SK-N-SH (cell line): ENCODE measurements at regions of chr6 and their contacts with region 1.

Region 1: DNA sequence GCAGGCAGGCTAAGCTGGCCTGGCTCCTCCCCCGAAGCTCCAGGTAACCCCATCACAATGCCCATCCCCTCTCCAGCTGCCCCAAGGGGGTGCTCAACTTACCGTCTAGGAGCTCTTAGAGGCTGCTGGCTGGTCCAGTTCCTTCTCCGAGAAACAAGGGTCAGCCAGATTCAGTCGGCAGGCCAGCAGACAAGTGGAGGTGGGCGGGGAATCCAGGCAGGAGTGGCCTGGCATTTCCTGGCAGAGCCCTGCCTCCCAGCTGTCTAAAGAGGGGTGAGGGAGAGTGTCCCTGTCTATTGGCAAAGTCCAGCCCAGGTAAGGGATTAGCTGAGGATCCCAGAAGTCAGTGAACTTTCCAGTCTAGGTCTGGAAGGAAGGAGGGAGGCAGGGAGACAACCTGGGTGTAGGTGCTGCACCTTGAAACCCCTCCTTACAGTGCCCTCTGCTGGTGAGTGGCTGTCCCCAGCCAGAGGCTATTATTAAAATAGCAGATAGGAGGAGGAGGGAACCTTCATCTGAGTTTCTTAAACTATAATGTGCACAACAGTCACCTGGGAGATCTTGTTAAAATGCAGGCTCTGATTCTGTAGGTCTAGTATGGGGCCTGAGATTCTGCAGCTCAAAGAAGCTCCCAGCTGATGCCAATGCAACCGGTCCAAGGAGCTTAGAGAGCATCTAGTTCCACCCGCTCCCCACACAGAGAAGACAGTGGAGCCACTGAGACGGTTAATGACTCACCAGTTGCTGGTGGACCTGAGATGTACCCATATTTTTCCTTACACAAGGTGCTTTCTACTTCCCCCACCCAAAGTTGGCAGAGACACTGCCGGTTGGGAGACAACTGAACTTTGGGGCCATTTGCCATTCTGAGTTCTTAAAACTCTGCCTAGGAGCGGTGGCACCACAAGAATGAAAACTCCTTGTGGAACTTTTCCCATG is at the start of gene UNC5CL:
- DNase-seq: peak; percentile 45
- H3K4me3 ChIP-seq: no peak within 1 kb of the TSS
- H3K27ac ChIP-seq: no peak within 1 kb of the TSS
- H3K4me1 ChIP-seq: no peaks in the 10 kb centered on the region; a peak in 1 of 4 replicates
- H3K27me3 ChIP-seq: no peaks in the 10 kb centered on the region
- CTCF ChIP-seq: peak; percentile 63
- EP300 ChIP-seq: no peak
- RAD21 ChIP-seq: 0 out of 2 replicates have a peak, but pooled peaks have one; percentile 15
- polyA plus RNA-seq, gene UNC5CL: 0.10 TPM in 2 replicates

Region 2: GRCh38 chr6:41053041-41053440 is 13.7 kb after region 1 on chr6 and contains the start of gene APOBEC2:
- CTCF ChIA-PET with region 1: interaction called, 10 read pairs
- POLR2A ChIA-PET with region 1: no interaction called
- DNase-seq: no peak
- H3K4me3 ChIP-seq: no peak within 1 kb of the TSS
- H3K27ac ChIP-seq: no peak within 1 kb of the TSS
- H3K4me1 ChIP-seq: peaks cover 0 to 4% of the 10 kb centered on the region in 2 experiments; a peak in 1 of 4 replicates
- H3K27me3 ChIP-seq: no peaks in the 10 kb centered on the region
- CTCF ChIP-seq: no peak
- EP300 ChIP-seq: no peak
- RAD21 ChIP-seq: no peak
- polyA plus RNA-seq, gene APOBEC2: not detected in 2 replicates